HEK293 (cell line): ENCODE measurements at regions of chr1 and their contacts with region 1.

Region 1: DNA sequence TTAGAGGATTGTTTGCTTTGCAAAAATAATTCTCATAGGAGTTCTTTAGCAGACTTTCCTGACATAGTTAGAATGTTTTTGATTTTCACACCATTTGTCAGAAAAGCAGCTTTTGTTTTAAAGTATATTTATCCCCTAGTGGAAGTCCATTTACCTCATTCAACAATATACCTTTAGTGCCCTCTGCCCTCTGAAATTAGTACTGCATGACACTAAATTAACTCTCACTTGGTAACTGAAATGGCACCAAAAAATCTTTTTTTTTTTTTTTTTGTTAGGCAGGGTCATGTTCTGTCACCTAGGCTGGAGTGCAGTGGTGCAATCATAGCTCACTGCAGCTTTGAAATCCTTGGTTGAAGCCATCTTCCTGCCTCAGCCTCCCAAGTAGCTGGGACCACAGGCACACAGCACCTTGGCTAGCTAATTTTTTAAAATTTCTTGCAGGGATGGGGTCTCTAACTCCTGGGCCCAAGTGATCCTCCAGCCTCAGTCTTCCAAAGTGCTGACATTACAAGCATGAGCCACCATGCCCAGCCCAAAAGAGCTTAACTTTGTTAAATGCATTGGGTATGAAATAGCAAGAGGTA is 13.6 kb downstream of the LRRC42 start:
- H3K4me3 ChIP-seq: no peak overlapping the region
- H3K27ac ChIP-seq: no peak overlapping the region
- H3K4me1 ChIP-seq: no peaks in the 10 kb centered on the region
- CTCF ChIP-seq: peak; percentile 34; the same call in 1 of the 2 replicates

Region 2: GRCh38 chr1:53869454-53870117 is 90.2 kb before region 1 on chr1:
- CTCF ChIA-PET with region 1: interaction called, 23 read pairs
- POLR2A ChIA-PET with region 1: no interaction called
- H3K4me3 ChIP-seq: no peak overlapping the region
- H3K27ac ChIP-seq: no peak overlapping the region
- H3K4me1 ChIP-seq: no peaks in the 10 kb centered on the region
- CTCF ChIP-seq: no peak

Region 3: GRCh38 chr1:53878492-53879105 is 81.2 kb before region 1 on chr1:
- CTCF ChIA-PET with region 1: interaction called, 53 read pairs
- POLR2A ChIA-PET with region 1: no interaction called
- H3K4me3 ChIP-seq: no peak overlapping the region
- H3K27ac ChIP-seq: no peak overlapping the region
- H3K4me1 ChIP-seq: no peaks in the 10 kb centered on the region
- CTCF ChIP-seq: no peak